ENCODE measurements at regions of chr10 and their contacts with region 1.

Region 1: DNA sequence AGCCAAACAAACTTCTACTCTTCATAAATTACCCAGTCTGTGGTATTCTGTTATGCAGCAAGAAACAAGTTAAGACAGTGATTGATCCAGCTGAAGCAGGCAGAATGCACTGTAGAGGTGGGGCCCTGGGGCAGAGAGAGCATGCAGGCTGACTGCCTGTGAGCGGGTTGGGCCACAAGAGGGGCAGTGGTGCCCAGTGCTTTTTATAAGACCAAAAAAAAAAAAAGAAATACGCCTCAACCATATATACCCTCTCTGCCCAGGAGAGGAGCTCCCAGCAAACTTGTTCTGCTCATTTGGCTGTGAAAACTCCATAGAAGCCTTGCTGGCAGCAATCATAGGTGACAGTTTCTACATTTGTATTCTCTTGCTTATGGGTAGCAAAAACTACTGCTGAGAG is 104.7 kb downstream of the SORBS1 start:
- DNase-seq: no peak
- H3K4me3 ChIP-seq: no peak overlapping the region
- H3K4me3 Mint-ChIP-seq: no peak overlapping the region
- H3K27ac ChIP-seq: no peak overlapping the region
- H3K27ac Mint-ChIP-seq: no peak overlapping the region
- H3K4me1 ChIP-seq: no peaks in the 10 kb centered on the region
- H3K4me1 Mint-ChIP-seq: no peaks in the 10 kb centered on the region
- H3K27me3 ChIP-seq: no peaks in the 10 kb centered on the region
- H3K27me3 Mint-ChIP-seq: peaks cover 5 to 7% of the 10 kb centered on the region in 2 donors

Region 2: DNA sequence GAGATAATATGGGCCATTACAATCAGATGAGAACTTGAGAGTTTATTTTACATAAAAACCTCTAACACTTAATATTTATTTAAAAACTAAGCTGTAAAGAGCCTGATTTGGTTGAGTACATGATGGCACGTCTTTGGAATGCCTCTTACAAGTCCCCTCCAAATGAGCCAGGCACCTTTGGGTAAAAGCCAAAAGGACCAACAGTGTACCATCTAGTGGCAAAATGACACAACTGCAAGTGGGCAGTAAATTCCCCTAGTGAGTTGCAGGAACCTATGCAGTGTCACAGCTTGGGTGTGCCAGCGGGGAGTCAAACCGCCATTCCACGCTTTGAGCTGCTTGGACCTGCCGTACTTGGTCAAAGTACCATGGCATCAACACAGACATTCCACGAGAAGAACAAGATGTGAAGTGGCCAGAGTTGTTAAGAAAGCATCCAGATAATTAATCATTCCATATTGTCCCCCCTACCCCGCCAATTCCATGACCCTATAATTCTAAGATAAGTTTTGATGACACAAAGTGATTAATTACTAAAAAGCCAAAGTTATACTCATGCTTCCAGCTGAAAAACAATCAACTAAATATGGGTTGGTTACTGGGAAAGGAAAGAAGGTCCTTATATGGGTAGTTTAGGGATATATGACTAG is 10.6 kb before region 1 on chr10:
- CTCF ChIA-PET with region 1: interaction called, 11 read pairs
- POLR2A ChIA-PET with region 1: no interaction called
- intact Hi-C with region 1: no loop called
- DNase-seq: peak in 4 of 5 donors; percentile 3 to 15 (median 12)
- H3K4me3 ChIP-seq: no peak overlapping the region
- H3K4me3 Mint-ChIP-seq: no peak overlapping the region
- H3K27ac ChIP-seq: no peak overlapping the region
- H3K27ac Mint-ChIP-seq: no peak overlapping the region
- H3K4me1 ChIP-seq: no peaks in the 10 kb centered on the region
- H3K4me1 Mint-ChIP-seq: peaks cover 3 to 5% (median 4%) of the 10 kb centered on the region in 4 donors
- H3K27me3 ChIP-seq: no peaks in the 10 kb centered on the region
- H3K27me3 Mint-ChIP-seq: peaks cover 2 to 4% of the 10 kb centered on the region in 2 donors

Region 3: DNA sequence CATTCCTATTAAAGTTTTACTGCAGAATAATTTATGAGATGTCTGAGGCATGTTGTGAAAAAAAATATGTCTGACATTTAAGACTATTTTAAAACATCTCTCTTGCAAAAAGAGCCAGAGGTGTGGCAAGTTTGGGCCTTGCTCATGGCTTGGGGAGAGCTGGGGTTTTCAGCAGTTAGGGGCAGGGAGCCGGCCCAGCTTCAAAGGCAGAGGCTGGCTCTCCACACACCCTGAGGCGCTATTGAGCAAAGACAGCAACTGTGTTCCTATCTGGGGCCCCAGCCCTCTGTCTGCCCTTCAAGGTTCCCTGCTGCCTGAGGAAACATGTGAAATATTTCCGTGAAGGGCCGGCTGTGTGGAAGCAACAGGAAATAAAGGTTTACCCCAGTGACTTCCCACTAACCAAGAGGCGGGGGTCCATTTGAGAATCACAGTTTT is 10.7 kb after region 1 on chr10:
- CTCF ChIA-PET with region 1: no interaction called
- POLR2A ChIA-PET with region 1: no interaction called
- intact Hi-C with region 1: no loop called
- DNase-seq: no peak
- H3K4me3 ChIP-seq: no peak overlapping the region
- H3K4me3 Mint-ChIP-seq: no peak overlapping the region
- H3K27ac ChIP-seq: no peak overlapping the region
- H3K27ac Mint-ChIP-seq: no peak overlapping the region
- H3K4me1 ChIP-seq: no peaks in the 10 kb centered on the region
- H3K4me1 Mint-ChIP-seq: no peaks in the 10 kb centered on the region
- H3K27me3 ChIP-seq: no peaks in the 10 kb centered on the region
- H3K27me3 Mint-ChIP-seq: peaks cover 4 to 6% of the 10 kb centered on the region in 2 donors

Measured in CD4-positive, alpha-beta memory T cell (primary cell).